Prostate gland (tissue), 2 donors: ENCODE measurements at regions of chr1 and their contacts with region 1.

Region 1: DNA sequence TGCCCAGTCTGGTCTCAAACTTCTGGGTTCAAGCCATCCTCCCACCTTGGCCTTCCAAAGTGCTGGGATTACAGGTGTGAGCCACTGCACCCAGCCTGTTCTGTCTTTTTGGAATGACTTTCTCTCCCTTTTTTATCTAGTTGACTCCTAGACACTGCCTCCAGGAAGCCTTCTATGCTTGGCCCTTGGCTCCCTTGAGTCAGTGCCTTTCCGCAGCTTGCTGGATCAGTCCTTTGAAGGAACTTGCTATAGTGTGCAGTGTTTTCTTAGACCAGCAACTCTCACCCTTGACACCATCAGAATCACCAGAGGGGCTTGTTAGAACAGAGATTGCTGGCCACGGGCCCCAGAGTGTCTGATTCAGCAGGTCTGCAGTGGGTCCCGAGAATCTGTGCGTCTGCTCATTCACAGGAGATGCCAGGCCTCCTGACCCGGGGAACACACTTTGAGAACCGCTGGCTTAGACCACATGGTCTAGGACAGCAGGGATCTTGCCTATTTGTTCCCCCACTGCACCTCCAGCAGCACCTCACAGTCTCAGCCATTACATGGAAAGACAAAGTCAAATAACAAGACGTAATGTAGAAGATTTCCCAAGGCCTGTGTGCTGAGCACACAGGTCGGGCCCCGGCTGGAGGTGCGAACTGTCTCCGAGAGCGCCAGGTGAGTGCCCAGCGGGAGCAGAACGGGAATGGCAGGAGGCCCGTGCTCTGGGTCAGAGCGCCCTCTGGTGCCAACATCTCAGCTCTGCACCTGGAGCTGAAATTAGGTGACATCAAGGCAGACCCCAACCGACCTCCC is 27.4 kb upstream of the CTPS1 start:
- DNase-seq: peak; percentile 79
- H3K4me3 ChIP-seq: no peak overlapping the region
- H3K27ac ChIP-seq: no peak overlapping the region
- H3K4me1 ChIP-seq: no peaks in the 10 kb centered on the region
- H3K27me3 ChIP-seq: no peaks in the 10 kb centered on the region
- CTCF ChIP-seq: peak; percentile 89 to 97 (median 95)
- POLR2A ChIP-seq: no peak

Region 2: DNA sequence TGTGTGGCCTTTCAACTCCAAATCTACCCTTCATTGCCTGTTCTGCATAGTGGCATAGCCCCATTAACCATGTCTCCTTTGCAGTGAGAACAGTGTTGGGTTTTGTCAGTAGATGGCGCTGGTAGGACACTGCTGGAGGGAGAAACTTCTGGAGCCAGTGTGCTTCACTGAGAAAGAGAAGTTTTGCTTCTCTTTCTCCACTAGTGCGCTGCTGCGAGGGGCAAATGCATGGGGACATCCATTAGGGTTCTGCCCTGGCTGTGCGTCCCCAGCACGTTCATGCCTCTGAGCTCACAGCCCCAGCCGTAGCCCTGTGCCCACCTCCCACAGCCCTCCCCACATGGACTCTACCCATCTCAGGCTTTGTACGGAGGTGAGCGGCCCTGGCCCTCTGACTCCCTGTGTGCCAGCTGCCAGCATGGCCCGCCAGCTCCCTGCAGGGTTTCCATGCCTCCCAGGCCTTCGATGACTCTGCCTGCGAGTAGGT is 339.8 kb before region 1 on chr1:
- intact Hi-C with region 1: loop called (anchors 5 kb)
- DNase-seq: peak; percentile 59
- H3K4me3 ChIP-seq: no peak overlapping the region
- H3K27ac ChIP-seq: no peak overlapping the region
- H3K4me1 ChIP-seq: no peaks in the 10 kb centered on the region
- H3K27me3 ChIP-seq: no peaks in the 10 kb centered on the region
- CTCF ChIP-seq: peak in 3 of 4 experiments; percentile 51 to 73 (median 68)
- POLR2A ChIP-seq: no peak

Region 3: DNA sequence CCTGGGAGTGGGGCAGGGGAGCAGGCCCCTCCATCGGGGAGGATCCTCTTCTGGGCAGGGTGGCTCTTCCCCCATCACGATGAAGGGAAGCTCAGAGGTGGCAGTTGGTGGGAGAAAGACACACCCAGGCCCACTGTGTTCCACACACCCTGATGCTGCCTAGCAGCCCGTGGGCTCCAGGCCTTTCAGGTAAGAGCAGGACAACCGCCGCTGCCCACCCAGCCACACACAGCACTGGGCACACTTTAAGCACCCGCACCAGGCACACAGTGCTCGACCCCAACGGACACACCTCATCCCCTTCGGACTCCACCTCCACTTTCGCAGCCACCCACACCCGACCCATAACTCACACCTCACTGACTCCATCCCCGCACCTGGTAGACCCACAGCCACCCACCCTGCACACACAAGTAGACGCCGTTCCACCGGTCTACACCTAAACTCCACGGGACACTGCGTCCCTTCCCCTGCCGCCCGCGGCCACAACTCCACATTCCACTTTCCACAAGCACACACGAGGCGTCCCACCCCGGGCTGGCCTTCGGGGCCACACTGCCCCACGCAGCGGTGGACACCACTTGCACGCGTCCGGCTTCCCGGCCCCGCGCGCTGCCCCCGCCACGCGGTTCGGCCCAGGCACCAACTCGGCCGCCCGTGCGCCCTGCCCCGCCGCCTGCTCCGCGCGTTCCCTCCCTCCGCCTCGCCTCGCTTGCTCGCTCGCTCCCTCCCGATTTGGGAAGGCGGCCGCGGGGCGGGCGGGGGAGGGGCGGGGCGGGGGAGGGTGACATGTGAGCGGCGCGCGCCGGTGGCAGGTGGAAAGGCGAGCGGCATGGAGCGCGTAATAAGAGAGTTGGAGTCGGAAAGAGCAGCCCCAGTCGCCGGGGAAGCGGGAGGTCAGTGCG is 168.9 kb before region 1 on chr1 and contains the start of gene KCNQ4:
- intact Hi-C with region 1: loop called (anchors 5 kb)
- DNase-seq: peak; percentile 54
- H3K4me3 ChIP-seq: peak within 1 kb of the TSS; percentile 32 to 39
- H3K27ac ChIP-seq: peak within 1 kb of the TSS; percentile 31 to 51
- H3K4me1 ChIP-seq: no peaks in the 10 kb centered on the region
- H3K27me3 ChIP-seq: no peaks in the 10 kb centered on the region
- CTCF ChIP-seq: no peak
- POLR2A ChIP-seq: peak; percentile 39
- total RNA-seq, gene KCNQ4: 1.8 to 3.1 TPM

Region 4: DNA sequence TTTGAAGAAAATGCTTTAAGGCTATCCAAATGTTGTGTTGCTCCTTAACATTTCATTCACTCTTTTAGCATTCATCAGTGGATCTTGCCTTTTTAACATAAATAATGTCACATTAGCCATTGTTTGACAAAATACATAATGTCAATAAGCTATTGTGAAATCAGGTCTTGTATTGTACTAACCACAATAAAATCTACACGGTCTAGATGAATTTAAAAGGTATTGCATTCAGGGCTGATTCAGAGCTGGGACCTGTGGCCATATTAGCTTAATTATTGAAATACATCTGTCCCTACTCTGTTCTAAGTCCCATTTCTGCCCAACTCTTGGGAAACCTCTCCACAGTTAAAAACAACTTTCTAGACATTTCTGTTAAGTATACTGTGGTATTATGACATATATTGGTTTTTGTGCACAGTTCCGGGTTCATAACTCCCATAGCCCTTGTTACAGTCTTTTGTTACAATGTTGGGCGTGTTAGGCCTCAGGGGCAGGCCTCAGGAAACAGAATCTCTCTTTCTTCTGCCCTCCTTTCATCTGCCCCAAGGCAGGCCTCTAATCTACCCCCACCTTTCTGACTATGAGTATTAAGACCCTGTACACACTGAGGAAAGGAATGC is 45.3 kb before region 1 on chr1:
- intact Hi-C with region 1: no loop called
- DNase-seq: no peak
- H3K4me3 ChIP-seq: no peak overlapping the region
- H3K27ac ChIP-seq: no peak overlapping the region
- H3K4me1 ChIP-seq: no peaks in the 10 kb centered on the region
- H3K27me3 ChIP-seq: no peaks in the 10 kb centered on the region
- CTCF ChIP-seq: no peak
- POLR2A ChIP-seq: no peak

Region 5: DNA sequence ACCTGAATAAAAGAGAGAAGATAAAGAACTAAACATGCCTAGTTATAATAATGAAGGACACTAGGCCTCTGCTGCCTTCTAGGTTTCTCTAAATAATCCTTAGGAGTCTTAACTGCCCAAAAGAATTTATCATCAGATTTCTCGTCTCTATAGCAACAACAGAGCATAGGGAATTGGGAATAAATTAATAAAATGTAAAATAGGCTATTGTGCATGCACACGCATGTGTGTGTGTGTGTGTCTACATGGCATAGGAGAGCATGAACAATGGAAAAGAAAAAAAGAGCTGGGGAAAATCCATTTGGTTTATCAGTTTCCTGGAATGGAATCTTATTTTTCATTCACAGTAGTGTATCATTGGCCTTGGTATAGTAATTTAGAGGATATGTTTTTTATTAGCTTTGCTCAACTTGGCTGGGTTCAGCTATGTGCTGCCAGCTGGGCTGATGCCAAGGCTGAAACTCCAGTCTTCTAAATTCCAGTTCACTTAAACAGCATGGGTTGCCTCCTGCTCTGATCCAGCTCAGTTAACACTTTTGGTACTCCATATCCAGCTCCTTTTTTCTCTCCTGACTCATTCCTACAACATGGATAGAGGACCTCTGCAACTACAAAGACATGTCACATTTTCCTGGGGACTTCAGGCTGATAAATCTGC is 149.9 kb after region 1 on chr1:
- intact Hi-C with region 1: no loop called
- DNase-seq: peak; percentile 91
- H3K4me3 ChIP-seq: no peak overlapping the region
- H3K27ac ChIP-seq: peak overlapping the region; percentile 16 to 26
- H3K4me1 ChIP-seq: peaks cover 6% of the 10 kb centered on the region
- H3K27me3 ChIP-seq: no peaks in the 10 kb centered on the region
- CTCF ChIP-seq: no peak
- POLR2A ChIP-seq: no peak